Pancreas (tissue), 10 donors: ENCODE measurements at regions of chr13 and their contacts with region 1.

Region 1: DNA sequence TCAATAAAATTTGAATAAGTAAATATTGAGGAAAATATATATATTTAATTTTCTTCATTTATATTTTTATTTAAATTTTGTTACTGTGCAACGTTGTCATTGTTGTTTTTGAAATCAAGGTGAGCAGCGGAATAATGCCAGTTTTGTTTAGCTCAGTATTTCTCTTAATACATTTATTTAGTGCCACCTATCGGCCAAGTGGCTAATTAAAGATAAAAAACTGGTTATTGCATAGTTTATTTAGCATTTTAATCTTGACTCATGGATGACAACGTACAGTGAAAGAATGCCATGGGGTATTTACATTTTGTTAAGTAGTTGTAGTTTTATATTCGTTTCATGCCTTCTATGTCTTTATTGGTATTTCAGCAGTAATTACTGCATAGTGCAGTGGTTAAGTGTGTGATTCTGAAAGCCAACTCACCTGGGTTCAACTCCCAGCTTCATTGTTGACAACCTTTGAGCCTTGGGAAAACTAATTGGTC is 265.9 kb downstream of the MYO16 start:
- DNase-seq: no peak
- ATAC-seq: peak in 3 of 4 donors; percentile 52 to 70 (median 61)
- H3K4me3 ChIP-seq: no peak overlapping the region
- H3K27ac ChIP-seq: no peak overlapping the region
- H3K4me1 ChIP-seq: no peaks in the 10 kb centered on the region
- H3K27me3 ChIP-seq: no peaks in the 10 kb centered on the region
- CTCF ChIP-seq: peak in 3 of 4 donors; percentile 26 to 45 (median 35)

Region 2: GRCh38 chr13:108322206-108322824 is 572.9 kb before region 1 on chr13:
- intact Hi-C with region 1: loop called in 2 of 3 experiments (anchors 10 kb)
- DNase-seq: no peak
- ATAC-seq: peak; percentile 46 to 90 (median 88)
- H3K4me3 ChIP-seq: no peak overlapping the region
- H3K27ac ChIP-seq: no peak overlapping the region
- H3K4me1 ChIP-seq: no peaks in the 10 kb centered on the region
- H3K27me3 ChIP-seq: no peaks in the 10 kb centered on the region
- CTCF ChIP-seq: peak; percentile 53 to 72 (median 62)